B cell (primary cell): ENCODE measurements at regions of chr22 and their contacts with region 1.

Region 1: DNA sequence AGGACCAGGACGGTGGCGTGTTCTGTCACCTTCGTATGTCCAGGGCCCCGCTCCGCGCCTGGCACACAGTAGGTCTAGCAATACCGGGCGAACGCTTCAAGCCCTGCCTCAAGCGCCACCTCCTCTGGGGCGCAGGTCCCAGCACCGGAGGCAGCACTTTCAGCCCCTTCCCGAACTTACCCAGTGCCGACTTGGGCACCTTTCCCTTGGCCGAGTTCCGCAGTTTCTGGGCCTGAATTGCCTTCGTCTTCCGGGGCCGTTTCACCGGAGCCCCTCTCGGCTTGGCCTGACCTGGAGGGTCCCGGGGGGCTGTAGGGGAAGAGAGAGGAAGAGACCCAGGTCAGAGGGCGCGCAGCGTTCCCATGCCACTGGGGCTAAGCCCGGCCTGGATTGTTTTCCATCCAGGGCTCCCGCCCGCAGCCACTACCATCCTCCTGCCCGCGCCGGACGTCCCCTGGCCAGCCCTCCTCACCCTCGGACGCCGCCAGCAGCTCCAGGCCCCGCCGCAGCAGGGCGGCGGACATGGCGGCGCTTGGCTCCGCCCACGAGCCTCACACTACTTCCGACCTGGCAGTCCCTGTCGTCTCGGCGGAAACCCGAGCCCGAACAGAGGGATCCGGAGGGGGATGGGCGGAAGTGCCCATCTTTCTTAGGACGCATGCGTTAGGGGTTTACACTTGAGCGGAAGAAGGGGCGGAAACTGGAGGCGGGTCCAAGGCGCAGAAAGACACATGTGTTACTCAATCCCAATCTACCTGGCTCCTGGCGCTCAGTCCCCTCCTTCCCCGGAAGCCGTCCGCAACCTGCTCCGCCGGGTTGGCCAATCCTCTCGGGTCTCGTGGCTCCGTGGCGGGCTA is at the start of gene RPS19BP1:
- DNase-seq: peak; percentile 100
- ATAC-seq: peak; percentile 83
- H3K4me3 ChIP-seq: peak within 1 kb of the TSS; percentile 70 to 96 (median 89)
- H3K4me3 Mint-ChIP-seq: peak within 1 kb of the TSS; percentile 91
- H3K27ac ChIP-seq: peak within 1 kb of the TSS; percentile 56 to 94
- H3K27ac Mint-ChIP-seq: peak within 1 kb of the TSS; percentile 94
- H3K4me1 ChIP-seq: peaks cover 45 to 58% of the 10 kb centered on the region in 2 donors
- H3K4me1 Mint-ChIP-seq: peaks cover 54% of the 10 kb centered on the region
- H3K27me3 ChIP-seq: peaks cover 0 to 5% (median 0%) of the 10 kb centered on the region in 4 experiments
- H3K27me3 Mint-ChIP-seq: no peaks in the 10 kb centered on the region
- CTCF ChIP-seq: no peak
- total RNA-seq, gene RPS19BP1: 59.1 and 60.3 TPM in 2 replicates

Region 2: DNA sequence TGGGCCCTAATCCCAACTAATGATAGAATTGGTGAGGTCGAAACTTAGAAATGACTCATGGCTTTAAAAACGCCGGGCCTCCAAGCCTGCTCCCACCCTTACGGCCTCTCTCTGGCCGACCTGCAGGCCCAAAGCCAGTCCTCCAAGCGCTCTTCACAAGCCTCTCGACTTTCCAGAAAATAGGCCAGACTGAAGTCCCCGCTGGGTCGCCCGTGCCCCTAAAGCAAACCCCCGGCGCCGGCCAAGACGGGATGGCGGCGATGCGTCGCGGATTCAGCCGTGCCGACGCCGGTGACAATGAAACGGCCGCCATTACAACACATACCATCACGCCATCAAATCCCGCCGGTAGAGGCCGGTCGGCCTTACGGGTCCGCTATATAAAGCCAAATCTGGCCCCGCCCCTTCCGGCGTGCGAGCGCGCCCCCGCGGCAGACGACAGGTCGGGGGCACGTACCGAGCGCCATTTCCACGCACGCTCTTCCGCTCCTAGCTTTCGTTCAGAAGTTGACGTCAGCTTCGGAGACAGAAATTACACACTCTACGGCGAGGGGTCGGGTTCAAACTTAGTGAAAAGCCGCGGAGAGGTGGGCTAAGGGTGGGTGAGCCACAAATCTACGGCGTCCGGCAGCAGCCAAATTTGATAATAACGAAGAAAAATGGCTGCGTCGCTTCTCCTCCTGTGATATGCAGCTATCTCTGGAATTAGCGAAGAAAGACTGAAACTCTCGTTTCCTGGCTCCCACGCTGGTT is 213.0 kb before region 1 on chr22 and contains the start of gene RPL3:
- CTCF ChIA-PET with region 1: interaction called, 83 read pairs
- POLR2A ChIA-PET with region 1: interaction called, 14 read pairs
- intact Hi-C with region 1: loop called (anchors 1 kb)
- DNase-seq: peak; percentile 100
- ATAC-seq: peak; percentile 86
- H3K4me3 ChIP-seq: peak within 1 kb of the TSS; percentile 80 to 99 (median 85)
- H3K4me3 Mint-ChIP-seq: peak within 1 kb of the TSS; percentile 99
- H3K27ac ChIP-seq: peak within 1 kb of the TSS; percentile 90 to 95
- H3K27ac Mint-ChIP-seq: peak within 1 kb of the TSS; percentile 98
- H3K4me1 ChIP-seq: peaks cover 27 to 38% of the 10 kb centered on the region in 2 donors
- H3K4me1 Mint-ChIP-seq: peaks cover 38% of the 10 kb centered on the region
- H3K27me3 ChIP-seq: no peaks in the 10 kb centered on the region
- H3K27me3 Mint-ChIP-seq: no peaks in the 10 kb centered on the region
- CTCF ChIP-seq: no peak
- total RNA-seq, gene RPL3: 2,562 and 2,665 TPM in 2 replicates

Region 3: DNA sequence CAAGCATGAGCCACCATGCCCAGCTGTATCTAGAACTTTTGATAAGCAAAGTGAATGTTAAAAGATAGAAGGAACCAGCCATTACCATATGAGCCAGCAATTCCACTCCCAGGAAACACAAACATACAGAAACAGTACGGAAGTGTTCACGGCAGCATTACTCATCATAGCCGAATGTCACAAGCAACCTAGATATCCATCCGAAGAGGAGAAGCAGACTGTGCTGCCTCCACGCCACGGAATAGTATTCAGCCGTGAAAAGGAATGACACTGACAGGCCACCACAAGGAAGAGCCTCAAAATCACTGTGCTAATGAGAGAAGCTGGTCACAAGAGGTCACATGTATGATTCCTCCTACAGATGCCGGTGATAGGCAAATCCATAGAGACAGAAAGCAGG is 93.3 kb before region 1 on chr22:
- CTCF ChIA-PET with region 1: interaction called, 14 read pairs
- POLR2A ChIA-PET with region 1: no interaction called
- intact Hi-C with region 1: no loop called
- DNase-seq: no peak
- ATAC-seq: no peak
- H3K4me3 ChIP-seq: no peak overlapping the region
- H3K4me3 Mint-ChIP-seq: no peak overlapping the region
- H3K27ac ChIP-seq: no peak overlapping the region
- H3K27ac Mint-ChIP-seq: peak overlapping the region; percentile 17
- H3K4me1 ChIP-seq: peaks cover 18 to 36% of the 10 kb centered on the region in 2 donors
- H3K4me1 Mint-ChIP-seq: peaks cover 36% of the 10 kb centered on the region
- H3K27me3 ChIP-seq: peaks cover 0 to 8% (median 0%) of the 10 kb centered on the region in 4 experiments
- H3K27me3 Mint-ChIP-seq: no peaks in the 10 kb centered on the region
- CTCF ChIP-seq: no peak

Region 4: DNA sequence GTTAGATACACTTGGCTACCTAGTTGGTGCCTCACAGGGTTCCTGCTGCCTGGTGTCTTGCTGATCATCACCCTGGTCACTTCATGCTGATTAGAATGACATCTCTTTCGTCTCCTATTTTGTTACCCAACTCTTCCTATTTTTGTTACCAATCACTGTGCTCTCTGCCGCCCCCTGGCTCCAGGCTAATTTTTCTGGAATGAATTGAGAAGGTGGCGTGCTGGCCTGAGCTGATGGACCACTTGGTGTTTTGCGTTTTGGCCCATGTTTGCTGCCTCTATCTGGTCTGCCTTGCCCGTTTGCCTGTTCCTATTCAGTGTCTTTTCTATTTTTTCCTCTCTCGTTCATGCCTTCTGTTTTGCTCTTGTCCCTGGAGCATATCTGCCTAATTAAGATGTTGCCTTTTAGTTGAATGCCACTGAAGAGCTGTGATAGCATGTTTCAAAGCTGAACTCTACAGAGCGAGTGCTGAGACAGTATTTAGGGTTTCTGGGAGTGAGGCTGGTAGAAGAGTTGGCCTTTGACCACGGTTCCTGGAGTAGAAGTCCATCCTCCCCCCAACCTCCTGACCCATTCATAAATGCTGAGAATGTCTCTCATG is 18.0 kb before region 1 on chr22:
- CTCF ChIA-PET with region 1: interaction called, 85 read pairs
- POLR2A ChIA-PET with region 1: interaction called, 57 read pairs
- intact Hi-C with region 1: no loop called
- DNase-seq: peak; percentile 66
- ATAC-seq: peak; percentile 41
- H3K4me3 ChIP-seq: no peak overlapping the region
- H3K4me3 Mint-ChIP-seq: no peak overlapping the region
- H3K27ac ChIP-seq: no peak overlapping the region
- H3K27ac Mint-ChIP-seq: peak overlapping the region; percentile 60
- H3K4me1 ChIP-seq: peaks cover 7 to 9% of the 10 kb centered on the region in 2 donors
- H3K4me1 Mint-ChIP-seq: peaks cover 28% of the 10 kb centered on the region
- H3K27me3 ChIP-seq: no peaks in the 10 kb centered on the region
- H3K27me3 Mint-ChIP-seq: no peaks in the 10 kb centered on the region
- CTCF ChIP-seq: peak; percentile 73

Region 5: GRCh38 chr22:40024201-40025061 is 492.0 kb after region 1 on chr22:
- CTCF ChIA-PET with region 1: interaction called, 328 read pairs
- POLR2A ChIA-PET with region 1: interaction called, 10 read pairs
- intact Hi-C with region 1: loop called (anchors 1 kb)
- DNase-seq: peak; percentile 77
- ATAC-seq: peak; percentile 79
- H3K4me3 ChIP-seq: no peak overlapping the region
- H3K4me3 Mint-ChIP-seq: no peak overlapping the region
- H3K27ac ChIP-seq: no peak overlapping the region
- H3K27ac Mint-ChIP-seq: no peak overlapping the region
- H3K4me1 ChIP-seq: peaks cover 7 to 8% of the 10 kb centered on the region in 2 donors
- H3K4me1 Mint-ChIP-seq: peaks cover 5% of the 10 kb centered on the region
- H3K27me3 ChIP-seq: peaks cover 0 to 3% (median 0%) of the 10 kb centered on the region in 4 experiments
- H3K27me3 Mint-ChIP-seq: peaks cover 7% of the 10 kb centered on the region
- CTCF ChIP-seq: peak; percentile 79

Region 6: DNA sequence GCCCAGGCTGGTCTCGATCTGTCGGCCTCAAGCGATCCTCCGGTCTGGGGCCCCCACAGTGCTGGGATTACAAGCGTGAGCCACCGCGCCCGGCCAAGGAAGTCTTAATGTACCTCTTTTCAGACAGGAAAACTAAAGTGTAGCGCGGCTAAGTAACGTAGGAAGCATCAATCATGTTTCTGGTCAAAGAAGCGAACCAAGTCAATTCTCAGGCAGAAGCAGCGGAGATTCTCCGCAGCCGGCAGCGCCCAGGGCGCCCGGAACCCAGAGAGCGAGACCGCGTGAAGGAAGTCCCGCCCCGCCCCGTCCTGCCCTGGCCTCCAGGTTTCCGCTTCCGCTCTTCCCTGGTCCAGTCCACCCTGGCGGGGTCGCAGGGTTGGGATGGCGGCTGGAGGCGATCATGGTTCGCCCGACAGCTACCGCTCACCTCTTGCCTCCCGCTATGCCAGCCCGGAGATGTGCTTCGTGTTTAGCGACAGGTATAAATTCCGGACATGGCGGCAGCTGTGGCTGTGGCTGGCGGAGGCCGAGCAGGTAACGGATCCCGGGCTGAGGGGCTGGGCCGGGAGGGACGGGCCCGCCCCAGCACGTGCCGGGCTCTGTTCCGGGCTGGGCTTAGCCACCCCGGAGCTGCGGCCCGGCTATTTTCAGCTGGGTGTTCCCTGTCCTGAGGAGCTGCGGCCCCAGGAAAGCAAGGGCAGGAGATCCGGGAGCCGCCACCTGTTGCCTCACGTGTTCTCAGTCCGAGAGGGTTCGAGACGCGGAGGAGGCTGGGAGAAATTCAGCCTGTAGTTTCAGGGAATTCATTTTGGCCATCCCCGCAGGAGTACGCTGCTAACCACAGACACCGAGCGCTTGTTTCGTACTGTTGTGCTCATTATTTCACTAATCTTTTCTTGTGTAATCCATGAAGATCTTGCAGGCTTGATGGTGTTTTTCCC is 814.0 kb after region 1 on chr22 and contains the start of gene ADSL:
- CTCF ChIA-PET with region 1: interaction called, 32 read pairs
- POLR2A ChIA-PET with region 1: no interaction called
- intact Hi-C with region 1: no loop called
- DNase-seq: peak; percentile 91
- ATAC-seq: peak; percentile 89
- H3K4me3 ChIP-seq: peak within 1 kb of the TSS; percentile 84 to 92 (median 88)
- H3K4me3 Mint-ChIP-seq: peak within 1 kb of the TSS; percentile 98
- H3K27ac ChIP-seq: peak within 1 kb of the TSS; percentile 74 to 75
- H3K27ac Mint-ChIP-seq: peak within 1 kb of the TSS; percentile 97
- H3K4me1 ChIP-seq: peaks cover 11 to 27% of the 10 kb centered on the region in 2 donors
- H3K4me1 Mint-ChIP-seq: peaks cover 32% of the 10 kb centered on the region
- H3K27me3 ChIP-seq: no peaks in the 10 kb centered on the region
- H3K27me3 Mint-ChIP-seq: no peaks in the 10 kb centered on the region
- CTCF ChIP-seq: no peak
- total RNA-seq, gene ADSL: 56.3 and 63.8 TPM in 2 replicates